GM10248 (cell line): ENCODE measurements at regions of chr1 and their contacts with region 1.

Region 1: GRCh38 chr1:212967801-212968200 is 17.5 kb downstream of the VASH2 start:
- DNase-seq: no peak
- CTCF ChIP-seq: no peak

Region 2: GRCh38 chr1:212950243-212951125 is 17.3 kb before region 1 on chr1 and contains the start of gene VASH2:
- CTCF ChIA-PET with region 1: interaction called, 66 read pairs
- POLR2A ChIA-PET with region 1: interaction called, 4 read pairs
- DNase-seq: peak; percentile 95
- CTCF ChIP-seq: no peak

Region 3: DNA sequence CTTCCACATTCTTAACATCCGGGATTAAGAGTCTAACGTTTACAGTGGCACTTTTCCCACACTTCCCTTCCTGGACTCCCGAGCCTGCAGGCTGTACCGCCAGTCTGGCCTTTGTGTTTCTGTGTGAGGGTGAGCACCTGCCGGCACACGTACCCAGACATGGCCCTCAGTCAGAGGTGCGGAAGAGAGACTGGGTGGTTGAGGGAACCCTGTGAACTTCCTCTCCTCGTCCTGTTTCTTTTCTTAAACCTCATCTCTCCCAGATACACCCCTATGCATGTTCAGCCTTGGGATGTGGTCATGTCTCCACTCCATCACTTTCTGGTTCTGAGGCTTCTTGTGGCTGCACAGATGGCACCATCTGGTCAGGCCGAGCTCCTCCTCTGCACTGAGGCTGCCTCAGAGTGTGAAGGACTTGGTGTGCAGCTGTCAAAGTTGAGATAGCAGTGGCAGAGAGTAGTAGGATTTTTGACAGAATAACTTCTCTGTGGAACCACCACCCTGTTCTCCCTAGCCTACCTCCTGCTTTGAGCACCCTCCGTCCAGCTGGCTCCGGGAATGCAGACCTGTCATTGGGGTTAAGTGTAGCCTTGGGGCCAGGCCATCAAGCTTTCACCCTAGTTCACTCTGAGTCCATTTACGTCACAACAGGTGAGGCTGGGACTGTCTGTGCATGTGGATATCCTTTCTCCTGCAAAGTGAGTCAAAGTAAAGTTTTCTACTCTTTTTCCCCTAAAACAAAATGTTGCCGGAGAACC is 13.9 kb after region 1 on chr1:
- CTCF ChIA-PET with region 1: interaction called, 87 read pairs
- POLR2A ChIA-PET with region 1: interaction called, 3 read pairs
- DNase-seq: no peak
- CTCF ChIP-seq: no peak

Region 4: GRCh38 chr1:212987702-212988322 is 20.0 kb after region 1 on chr1:
- CTCF ChIA-PET with region 1: interaction called, 87 read pairs
- POLR2A ChIA-PET with region 1: interaction called, 3 read pairs
- DNase-seq: no peak
- CTCF ChIP-seq: no peak

Region 5: GRCh38 chr1:213231795-213232231 is 264.0 kb after region 1 on chr1:
- CTCF ChIA-PET with region 1: no interaction called
- POLR2A ChIA-PET with region 1: no interaction called
- DNase-seq: no peak
- CTCF ChIP-seq: no peak